Dendritic cell treated with granulocyte-macrophage colony-stimulating factor and Interleukin-4, amounts not matched to agents 40 ng/mL and 50 ng/mL, for 4 days (primary cell): ENCODE measurements at regions of chr12 and their contacts with region 1.

Region 1: DNA sequence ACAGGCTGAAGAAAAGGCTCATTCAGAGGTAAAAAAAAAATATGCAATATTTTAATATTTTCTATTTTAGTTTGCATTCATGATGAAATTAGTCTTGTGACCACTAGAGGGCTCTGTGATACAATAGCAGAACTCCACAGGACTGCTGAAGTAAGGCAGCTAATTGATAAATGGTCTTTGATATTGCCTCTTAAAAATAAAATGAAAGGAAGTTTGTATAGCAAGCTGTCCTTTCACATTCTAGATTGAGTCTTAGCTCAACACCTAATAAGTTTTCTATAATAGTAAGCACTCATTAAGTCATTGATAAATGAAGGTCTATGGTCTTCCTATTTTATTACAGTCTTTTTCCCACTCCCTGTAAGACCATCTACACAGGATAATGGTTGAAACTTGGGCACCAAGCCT is 315.7 kb downstream of the NAV3 start:
- H3K4me3 Mint-ChIP-seq: no peak overlapping the region
- H3K27ac Mint-ChIP-seq: no peak overlapping the region
- H3K4me1 Mint-ChIP-seq: no peaks in the 10 kb centered on the region
- H3K27me3 Mint-ChIP-seq: no peaks in the 10 kb centered on the region

Region 2: GRCh38 chr12:77999074-77999715 is 147.2 kb before region 1 on chr12:
- intact Hi-C with region 1: loop called (anchors 10 kb)
- H3K4me3 Mint-ChIP-seq: no peak overlapping the region
- H3K27ac Mint-ChIP-seq: peak overlapping the region; percentile 73
- H3K4me1 Mint-ChIP-seq: peaks cover 10% of the 10 kb centered on the region
- H3K27me3 Mint-ChIP-seq: no peaks in the 10 kb centered on the region

Region 3: GRCh38 chr12:78584695-78585531 is 438.5 kb after region 1 on chr12:
- intact Hi-C with region 1: loop called (anchors 10 kb)
- H3K4me3 Mint-ChIP-seq: no peak overlapping the region
- H3K27ac Mint-ChIP-seq: no peak overlapping the region
- H3K4me1 Mint-ChIP-seq: no peaks in the 10 kb centered on the region
- H3K27me3 Mint-ChIP-seq: no peaks in the 10 kb centered on the region

Region 4: DNA sequence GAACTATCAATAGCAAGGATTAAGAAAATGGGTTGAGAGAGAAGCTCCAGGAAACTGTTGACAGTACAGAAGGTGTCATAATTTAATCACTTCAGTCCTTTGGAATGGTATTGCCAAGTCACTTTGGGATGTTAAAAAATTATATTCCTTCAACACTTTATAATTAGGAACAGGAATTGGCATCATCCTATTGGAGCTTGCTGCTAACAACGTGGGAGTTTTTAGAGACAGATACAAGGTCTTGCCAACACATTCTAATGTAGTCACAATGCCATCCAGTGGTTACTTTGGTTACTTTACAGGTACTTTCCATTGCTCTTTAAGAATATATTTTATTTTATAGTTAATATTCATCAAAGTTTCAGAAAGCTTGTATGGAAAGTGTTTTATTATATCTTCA is 1028.3 kb after region 1 on chr12:
- intact Hi-C with region 1: loop called (anchors 5 kb)
- H3K4me3 Mint-ChIP-seq: no peak overlapping the region
- H3K27ac Mint-ChIP-seq: no peak overlapping the region
- H3K4me1 Mint-ChIP-seq: no peaks in the 10 kb centered on the region
- H3K27me3 Mint-ChIP-seq: no peaks in the 10 kb centered on the region

Region 5: DNA sequence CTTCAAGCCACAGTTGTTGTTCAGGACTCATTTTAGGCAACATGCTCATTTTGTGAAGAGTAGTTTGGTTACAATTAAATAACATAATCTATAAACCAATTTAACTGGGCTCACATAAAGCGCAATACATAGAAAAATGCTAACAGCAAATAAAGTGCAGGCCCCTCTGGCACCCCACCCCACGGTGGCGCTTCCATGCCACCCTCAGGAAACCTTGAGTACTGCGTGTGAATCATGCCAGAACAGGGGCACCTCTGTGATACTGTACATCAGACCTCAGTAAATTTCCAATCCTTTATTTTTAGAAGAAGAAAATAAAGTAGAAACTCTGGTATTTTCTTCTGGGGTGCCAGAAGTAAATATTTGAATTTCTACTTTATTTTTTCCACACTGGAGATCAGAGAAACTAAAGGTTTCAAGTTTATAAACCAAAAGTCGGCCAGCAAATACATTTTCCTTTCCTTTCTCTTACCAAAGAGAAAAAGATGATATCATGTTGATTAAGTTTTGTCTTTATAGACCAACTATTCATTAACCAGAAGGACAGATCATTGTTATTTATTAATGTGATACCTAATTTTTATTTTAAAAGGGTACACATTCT is 1227.6 kb after region 1 on chr12:
- intact Hi-C with region 1: loop called (anchors 2 kb)
- H3K4me3 Mint-ChIP-seq: no peak overlapping the region
- H3K27ac Mint-ChIP-seq: no peak overlapping the region
- H3K4me1 Mint-ChIP-seq: no peaks in the 10 kb centered on the region
- H3K27me3 Mint-ChIP-seq: no peaks in the 10 kb centered on the region